ENCODE measurements at regions of chr12 and their contacts with region 1.

Region 1: GRCh38 chr12:119988782-119989668 is at the start of gene BICDL1:
- DNase-seq: peak; percentile 92 to 99 (median 98)
- ATAC-seq: peak; percentile 84 to 87
- H3K4me3 Mint-ChIP-seq: peak within 1 kb of the TSS; percentile 79 to 92 (median 88)
- H3K27ac Mint-ChIP-seq: peak within 1 kb of the TSS; percentile 84 to 98 (median 95)
- H3K4me1 Mint-ChIP-seq: peaks cover 11 to 41% (median 32%) of the 10 kb centered on the region in 4 donors
- H3K27me3 Mint-ChIP-seq: peaks cover 0 to 2% (median 0%) of the 10 kb centered on the region in 5 donors
- polyA plus RNA-seq, gene BICDL1: 1.2 to 1.9 (median 1.4) TPM

Region 2: DNA sequence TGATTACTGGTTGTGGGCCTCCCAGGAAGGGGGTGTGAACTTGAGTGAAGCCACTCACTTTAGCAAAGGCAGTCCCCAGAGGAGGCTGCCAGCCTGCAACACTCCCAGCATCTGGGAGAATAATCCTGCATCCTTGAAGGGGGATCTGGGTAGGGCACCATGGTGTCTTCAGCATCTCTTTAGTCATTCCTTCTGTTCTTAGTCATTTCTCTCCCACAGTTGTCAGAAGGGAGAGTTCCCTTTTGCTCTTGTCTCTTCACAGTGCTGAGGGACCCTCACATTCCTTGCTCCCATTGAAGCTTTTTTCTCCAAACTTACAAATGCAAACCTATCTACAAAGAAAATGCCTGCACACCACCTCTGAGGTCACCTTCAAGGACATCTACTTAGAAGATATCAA is 63.8 kb before region 1 on chr12:
- POLR2A ChIA-PET with region 1: no interaction called
- DNase-seq: no peak
- ATAC-seq: no peak
- H3K4me3 Mint-ChIP-seq: no peak overlapping the region
- H3K27ac Mint-ChIP-seq: no peak overlapping the region
- H3K4me1 Mint-ChIP-seq: no peaks in the 10 kb centered on the region
- H3K27me3 Mint-ChIP-seq: peaks cover 0 to 4% (median 0%) of the 10 kb centered on the region in 5 donors

Region 3: GRCh38 chr12:120012067-120012621 is 23.1 kb after region 1 on chr12:
- POLR2A ChIA-PET with region 1: interaction called, 105 read pairs
- DNase-seq: peak; percentile 37 to 90 (median 70)
- ATAC-seq: peak; percentile 48 to 60
- H3K4me3 Mint-ChIP-seq: peak overlapping the region; percentile 50 to 77 (median 68)
- H3K27ac Mint-ChIP-seq: peak overlapping the region; percentile 92 to 99 (median 96)
- H3K4me1 Mint-ChIP-seq: peaks cover 34 to 89% (median 81%) of the 10 kb centered on the region in 4 donors
- H3K27me3 Mint-ChIP-seq: no peaks in the 10 kb centered on the region

Region 4: DNA sequence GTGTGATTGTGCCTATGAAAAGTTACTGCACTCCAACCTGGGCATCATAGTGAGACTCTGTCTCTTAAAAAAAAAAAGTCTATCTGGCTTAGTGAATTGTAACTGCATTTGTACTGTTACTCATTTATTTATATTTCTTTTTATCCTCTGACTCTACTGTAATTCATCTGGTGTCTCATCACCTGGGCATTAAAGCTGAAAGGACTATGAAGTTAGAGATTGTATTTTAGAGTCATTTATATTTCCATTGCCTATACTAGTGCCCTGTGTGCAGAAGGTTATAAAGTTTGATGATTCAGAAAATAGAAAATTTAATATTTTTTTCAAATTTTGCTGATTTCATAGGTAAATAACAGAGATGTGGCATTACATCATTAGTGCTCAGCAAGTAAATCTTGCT is 30.2 kb after region 1 on chr12:
- POLR2A ChIA-PET with region 1: interaction called, 35 read pairs
- DNase-seq: no peak
- ATAC-seq: no peak
- H3K4me3 Mint-ChIP-seq: no peak overlapping the region
- H3K27ac Mint-ChIP-seq: peak overlapping the region in 4 of 10 donors; percentile 54 to 77 (median 64)
- H3K4me1 Mint-ChIP-seq: peaks cover 18 to 32% (median 27%) of the 10 kb centered on the region in 4 donors
- H3K27me3 Mint-ChIP-seq: no peaks in the 10 kb centered on the region

Region 5: DNA sequence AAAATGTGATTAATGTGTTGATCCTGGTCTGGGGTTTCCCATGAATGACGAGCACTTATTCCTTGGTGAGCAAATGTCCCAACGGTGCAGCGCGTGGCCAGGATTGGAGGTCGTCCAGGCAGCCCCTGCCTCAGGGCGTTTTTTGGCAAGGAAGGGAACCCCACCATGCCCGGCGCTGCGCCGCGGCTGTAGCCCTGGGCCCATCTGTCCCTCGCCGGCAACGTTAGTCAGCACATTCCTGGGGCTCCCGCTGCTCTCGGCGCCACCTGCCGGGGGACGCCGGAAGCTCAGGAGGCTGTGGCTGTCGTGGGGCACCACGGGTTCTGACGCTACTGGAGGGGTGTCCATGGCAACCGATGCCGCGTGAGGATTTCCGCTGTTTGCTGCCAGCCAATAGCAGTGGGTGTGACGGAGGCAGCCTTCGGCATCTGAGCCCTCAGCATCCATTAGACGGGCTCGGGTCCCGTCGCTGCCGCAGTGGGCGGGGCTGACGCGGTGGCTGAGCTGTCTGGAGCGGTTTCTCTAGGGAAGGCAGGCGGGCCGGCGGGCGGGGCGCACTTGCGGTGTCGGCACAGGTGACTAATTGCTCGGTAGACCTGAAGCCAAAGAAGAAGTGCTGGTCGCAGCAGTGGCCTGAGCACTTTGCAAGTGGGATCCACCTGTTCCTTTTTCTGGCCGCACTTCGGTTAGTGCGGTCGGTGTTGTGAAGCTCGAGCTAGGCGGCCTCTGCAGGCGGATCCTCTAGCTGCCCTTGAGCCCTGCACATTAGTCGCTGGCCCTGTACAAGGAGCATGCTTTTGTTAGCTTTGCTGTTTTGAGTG is 98.0 kb after region 1 on chr12:
- POLR2A ChIA-PET with region 1: interaction called, 39 read pairs
- DNase-seq: peak; percentile 98 to 100 (median 99)
- ATAC-seq: peak; percentile 97
- H3K4me3 Mint-ChIP-seq: peak overlapping the region; percentile 56 to 86 (median 79)
- H3K27ac Mint-ChIP-seq: peak overlapping the region; percentile 62 to 96 (median 87)
- H3K4me1 Mint-ChIP-seq: peaks cover 14 to 20% (median 16%) of the 10 kb centered on the region in 4 donors
- H3K27me3 Mint-ChIP-seq: peaks cover 0 to 1% (median 0%) of the 10 kb centered on the region in 5 donors

Region 6: DNA sequence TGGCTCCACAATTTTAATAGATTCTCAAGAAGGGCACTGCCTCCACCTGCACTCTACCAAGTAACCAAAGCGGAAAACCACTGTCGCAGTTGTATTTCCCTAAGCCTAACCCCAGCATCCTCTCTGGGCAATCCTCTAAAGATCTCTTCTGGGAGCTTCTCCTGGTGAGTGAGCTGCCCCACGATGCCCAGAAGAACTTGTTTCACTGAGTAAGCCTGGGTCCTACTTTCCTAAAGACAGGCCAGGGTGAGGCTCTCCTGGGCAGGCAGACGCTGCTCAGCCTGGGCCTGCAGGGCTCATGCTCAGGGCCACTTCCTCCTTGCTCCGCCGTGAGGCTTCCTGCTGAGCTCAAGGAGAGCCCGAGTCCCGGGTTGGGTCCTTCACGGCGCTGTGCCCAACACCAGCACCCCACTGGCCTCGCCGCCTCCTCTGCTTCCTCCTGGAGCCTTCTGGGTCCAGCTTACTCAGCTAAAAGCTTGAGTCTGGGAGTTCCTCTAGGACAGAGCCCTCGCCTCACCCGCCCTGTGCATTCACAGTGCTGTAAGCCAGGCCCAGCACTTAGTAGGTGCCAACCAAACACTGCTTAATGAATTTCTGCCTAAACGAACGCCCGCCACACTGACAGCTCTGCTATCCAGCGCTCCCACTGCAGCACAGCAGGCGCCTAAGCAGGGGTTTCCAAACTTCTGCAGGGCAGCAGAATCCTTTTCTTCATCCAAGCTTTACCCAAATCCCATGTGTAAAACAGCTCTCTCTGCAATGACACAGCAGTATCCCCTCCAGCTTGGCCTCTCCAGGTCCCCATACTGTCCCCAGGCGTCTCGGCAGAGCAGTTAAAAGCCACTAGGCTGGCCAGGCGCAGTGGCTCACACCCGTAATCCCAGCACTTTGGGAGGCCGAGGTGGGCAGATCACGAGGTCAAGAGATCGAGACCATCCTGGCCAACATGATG is 121.8 kb after region 1 on chr12:
- POLR2A ChIA-PET with region 1: interaction called, 10 read pairs
- DNase-seq: peak in 8 of 10 donors; percentile 8 to 60 (median 43)
- ATAC-seq: peak; percentile 83 to 86
- H3K4me3 Mint-ChIP-seq: peak overlapping the region; percentile 64 to 86 (median 80)
- H3K27ac Mint-ChIP-seq: peak overlapping the region; percentile 47 to 91 (median 80)
- H3K4me1 Mint-ChIP-seq: peaks cover 40 to 82% (median 76%) of the 10 kb centered on the region in 4 donors
- H3K27me3 Mint-ChIP-seq: no peaks in the 10 kb centered on the region

Region 7: DNA sequence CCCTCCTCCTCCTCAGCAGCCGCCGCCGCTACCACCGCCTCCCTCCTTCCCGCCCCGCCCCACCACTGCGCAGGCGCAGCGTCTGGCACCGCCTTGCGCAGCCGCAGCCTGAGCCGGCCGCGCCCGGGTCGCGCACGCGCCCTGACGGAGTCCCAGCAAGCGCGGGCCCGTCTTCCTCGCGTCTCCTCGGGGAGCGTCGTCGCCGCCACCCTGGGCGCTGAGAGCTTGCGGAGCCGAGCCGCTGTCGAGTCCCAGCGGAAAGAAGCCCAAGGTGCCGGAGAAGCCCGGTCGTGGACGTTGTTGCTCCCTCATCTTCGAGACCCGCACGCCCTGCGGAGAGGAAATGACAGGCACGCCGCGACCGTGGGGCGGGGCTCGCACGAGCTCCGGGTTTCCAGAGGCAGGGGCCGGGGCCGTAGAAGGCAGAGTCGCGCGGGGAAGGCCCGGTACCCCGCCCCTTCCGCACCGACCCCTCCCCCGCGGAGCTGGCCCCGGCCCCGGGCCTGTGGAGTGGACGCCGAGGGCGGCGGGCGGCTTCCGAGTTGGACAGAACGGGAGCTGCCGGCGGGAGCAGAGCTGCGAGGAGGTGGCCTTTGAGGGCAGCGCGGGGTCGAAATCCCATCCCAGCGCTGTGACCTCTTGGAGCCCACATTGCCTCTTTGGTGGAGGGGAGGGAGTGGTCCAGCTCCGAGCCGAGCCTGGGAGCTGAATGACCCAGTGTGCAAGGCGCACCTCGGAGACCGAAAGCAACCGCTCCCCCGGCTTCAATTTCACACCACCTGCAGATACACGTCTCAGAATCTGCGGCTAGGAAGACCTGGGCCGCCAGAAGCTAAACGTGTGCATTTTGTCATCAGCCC is 128.0 kb after region 1 on chr12:
- POLR2A ChIA-PET with region 1: interaction called, 17 read pairs
- DNase-seq: peak; percentile 94 to 98 (median 98)
- ATAC-seq: peak; percentile 77
- H3K4me3 Mint-ChIP-seq: peak overlapping the region; percentile 70 to 95 (median 90)
- H3K27ac Mint-ChIP-seq: peak overlapping the region; percentile 76 to 95 (median 88)
- H3K4me1 Mint-ChIP-seq: peaks cover 40 to 81% (median 77%) of the 10 kb centered on the region in 4 donors
- H3K27me3 Mint-ChIP-seq: no peaks in the 10 kb centered on the region

Measured in naive thymus-derived CD8-positive, alpha-beta T cell (primary cell).